H1 (cell line): ENCODE measurements at regions of chr1 and their contacts with region 1.

Region 1: GRCh38 chr1:26279456-26280332 is at the start of gene SH3BGRL3:
- DNase-seq: peak in 1 of 2 experiments; percentile 85
- H3K4me3 ChIP-seq: peak within 1 kb of the TSS; percentile 64 to 69 (median 64)
- H3K27ac ChIP-seq: peak within 1 kb of the TSS; percentile 26; the same call in 1 of the 2 replicates
- H3K4me1 ChIP-seq: peaks cover 10 to 34% (median 21%) of the 10 kb centered on the region in 4 experiments
- H3K27me3 ChIP-seq: no peaks in the 10 kb centered on the region
- CTCF ChIP-seq: peak in 2 of 3 experiments; percentile 57 to 75; a peak in 3 of 4 replicates
- EP300 ChIP-seq: no peak
- POLR2A ChIP-seq: peak in 1 of 2 experiments; percentile 63; a peak in 1 of 3 replicates
- RAD21 ChIP-seq: peak; percentile 48 to 51
- total RNA-seq, gene SH3BGRL3: 77.8 and 84.4 TPM in 2 replicates

Region 2: DNA sequence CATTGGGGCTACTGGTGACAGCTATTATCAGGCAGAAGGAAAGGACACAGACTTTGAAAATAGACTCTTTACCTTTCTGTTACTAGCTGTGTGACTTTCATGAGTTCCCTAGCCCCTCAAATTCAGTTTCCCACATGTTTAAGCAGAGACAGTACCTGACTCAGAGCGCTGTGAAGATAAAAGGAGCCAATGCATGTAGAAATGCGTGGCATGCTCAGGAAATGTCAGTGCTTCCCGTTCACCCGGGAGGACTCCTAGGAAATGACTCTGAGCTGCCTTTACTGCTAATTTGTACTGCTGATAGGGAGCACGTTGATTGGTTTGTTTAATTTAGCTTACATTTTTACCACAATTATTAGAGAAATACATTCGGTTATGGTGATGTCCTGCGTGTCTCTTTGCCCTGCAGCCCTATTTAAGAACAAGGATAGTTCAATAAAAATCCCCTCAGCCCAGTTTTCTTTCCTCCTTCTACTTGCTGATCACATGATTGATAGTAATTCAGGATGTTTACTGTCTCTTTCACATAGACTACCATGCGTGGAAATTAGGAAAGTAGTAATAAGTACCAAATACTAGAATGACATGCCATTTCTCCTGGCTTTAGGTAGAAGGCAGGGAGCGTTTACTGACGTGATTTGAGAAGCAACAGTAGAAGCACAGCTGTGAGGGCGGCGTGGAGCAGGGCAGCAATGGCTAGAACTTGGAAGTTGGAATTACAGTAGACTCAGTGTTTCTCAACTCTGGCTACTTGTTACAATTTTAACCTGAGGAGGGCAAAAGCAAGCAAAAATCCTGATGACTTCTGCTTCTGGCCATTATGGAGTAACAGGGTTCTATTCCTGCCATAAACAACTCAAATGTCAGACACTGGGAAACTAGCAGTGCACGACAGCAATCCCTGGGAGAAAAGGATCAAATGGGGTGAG is 152.2 kb before region 1 on chr1:
- CTCF ChIA-PET with region 1: no interaction called
- POLR2A ChIA-PET with region 1: no interaction called
- DNase-seq: peak in 1 of 2 experiments; percentile 33
- H3K4me3 ChIP-seq: no peak overlapping the region
- H3K27ac ChIP-seq: no peak overlapping the region
- H3K4me1 ChIP-seq: no peaks in the 10 kb centered on the region
- H3K27me3 ChIP-seq: no peaks in the 10 kb centered on the region
- CTCF ChIP-seq: no peak
- EP300 ChIP-seq: no peak
- POLR2A ChIP-seq: no peak
- RAD21 ChIP-seq: no peak

Region 3: DNA sequence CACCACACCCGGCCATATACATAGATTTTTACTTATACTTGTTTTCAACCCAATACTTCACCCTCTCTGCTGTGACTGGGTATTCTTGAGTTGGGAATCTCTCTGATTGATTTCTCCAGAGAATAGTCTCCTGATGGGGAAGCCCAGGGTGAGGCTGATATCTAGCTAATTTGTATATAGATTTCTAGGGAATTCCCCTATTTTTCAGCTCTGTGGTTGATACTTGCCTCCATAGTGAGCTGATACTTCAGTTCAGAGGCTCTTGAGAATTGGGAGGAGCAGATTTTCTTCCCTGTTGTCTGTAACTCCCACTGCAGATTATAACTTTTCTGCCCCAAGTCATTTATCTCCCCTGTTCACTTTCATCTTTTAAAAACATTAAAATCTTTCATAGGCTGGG is 14.3 kb before region 1 on chr1:
- CTCF ChIA-PET with region 1: interaction called, 21 read pairs
- POLR2A ChIA-PET with region 1: interaction called, 3 read pairs
- DNase-seq: no peak
- H3K4me3 ChIP-seq: no peak overlapping the region
- H3K27ac ChIP-seq: no peak overlapping the region
- H3K4me1 ChIP-seq: no peaks in the 10 kb centered on the region
- H3K27me3 ChIP-seq: no peaks in the 10 kb centered on the region
- CTCF ChIP-seq: no peak
- EP300 ChIP-seq: no peak
- POLR2A ChIP-seq: no peak
- RAD21 ChIP-seq: no peak